MCF 10A (cell line): ENCODE measurements at regions of chr1 and their contacts with region 1.

Region 1: GRCh38 chr1:13748610-13749505 is 48.9 kb downstream of the PRDM2 start:
- DNase-seq: peak; percentile 97
- H3K4me3 Mint-ChIP-seq: peak overlapping the region; percentile 91
- H3K27ac Mint-ChIP-seq: peak overlapping the region; percentile 91
- H3K4me1 Mint-ChIP-seq: peaks cover 35% of the 10 kb centered on the region
- H3K27me3 Mint-ChIP-seq: no peaks in the 10 kb centered on the region
- CTCF ChIP-seq: no peak

Region 2: DNA sequence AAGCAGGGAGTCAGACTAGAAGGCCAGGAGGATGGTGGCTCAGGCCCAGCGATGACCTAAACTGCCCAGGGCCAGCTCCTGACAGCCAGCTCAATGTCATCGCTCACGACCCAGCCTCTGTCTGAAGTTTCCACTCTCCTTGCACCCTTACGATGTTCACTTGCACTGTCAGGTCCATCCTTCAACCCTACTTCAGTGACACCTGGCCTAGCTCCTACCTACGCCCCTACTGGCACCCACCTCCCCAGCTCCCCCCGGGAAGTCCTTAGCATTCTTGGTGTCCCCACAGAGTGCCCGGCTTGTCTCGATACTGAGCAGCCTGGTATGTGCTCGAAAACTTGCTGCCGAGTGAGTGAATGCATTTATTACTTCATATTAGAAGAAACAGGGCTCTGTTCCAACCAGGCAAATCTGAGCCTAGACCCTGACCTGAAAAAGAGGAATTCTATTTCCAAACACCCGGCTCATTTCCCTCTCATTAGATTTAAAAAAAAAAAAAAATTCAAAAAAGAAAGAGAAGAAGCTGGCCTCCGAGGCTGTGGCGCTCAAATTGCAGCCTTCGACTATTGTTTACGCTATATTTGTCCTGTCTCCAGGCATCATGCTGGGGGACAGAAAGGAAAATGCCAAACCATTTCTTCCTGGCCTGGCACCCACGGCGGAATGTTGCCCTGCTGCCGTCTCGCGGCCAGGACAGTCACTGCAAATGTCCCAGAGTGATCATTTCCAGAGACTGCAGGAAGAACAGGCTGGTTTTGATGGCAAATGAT is 205.2 kb before region 1 on chr1:
- CTCF ChIA-PET with region 1: no interaction called
- POLR2A ChIA-PET with region 1: no interaction called
- intact Hi-C with region 1: no loop called
- DNase-seq: peak; percentile 36
- H3K4me3 Mint-ChIP-seq: no peak overlapping the region
- H3K27ac Mint-ChIP-seq: no peak overlapping the region
- H3K4me1 Mint-ChIP-seq: peaks cover 14% of the 10 kb centered on the region
- H3K27me3 Mint-ChIP-seq: no peaks in the 10 kb centered on the region
- CTCF ChIP-seq: peak; percentile 38

Region 3: DNA sequence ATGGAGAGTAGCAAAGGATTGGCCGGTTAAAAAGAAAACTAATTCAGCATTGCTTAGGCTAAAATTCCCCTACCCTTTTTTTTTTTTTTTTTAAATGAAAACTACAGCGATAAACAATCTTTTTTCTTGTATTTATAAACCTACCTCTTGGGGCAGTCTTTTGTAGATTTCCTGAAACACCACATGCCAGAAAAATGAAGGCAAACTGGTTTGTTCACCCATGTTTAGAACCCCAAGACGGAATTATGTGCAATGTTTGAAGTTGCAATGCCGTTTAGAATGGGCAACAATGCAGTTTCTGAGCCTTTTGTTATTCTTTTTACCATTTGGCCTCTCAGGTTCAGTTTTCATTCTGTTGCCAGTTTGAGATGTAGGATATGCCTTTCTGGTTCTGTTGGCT is 10.2 kb after region 1 on chr1:
- CTCF ChIA-PET with region 1: no interaction called
- POLR2A ChIA-PET with region 1: interaction called, 17 read pairs
- intact Hi-C with region 1: no loop called
- DNase-seq: no peak
- H3K4me3 Mint-ChIP-seq: no peak overlapping the region
- H3K27ac Mint-ChIP-seq: no peak overlapping the region
- H3K4me1 Mint-ChIP-seq: peaks cover 35% of the 10 kb centered on the region
- H3K27me3 Mint-ChIP-seq: no peaks in the 10 kb centered on the region
- CTCF ChIP-seq: peak; percentile 16